CD8-positive, alpha-beta memory T cell (primary cell): ENCODE measurements at regions of chr3 and their contacts with region 1.

Region 1: DNA sequence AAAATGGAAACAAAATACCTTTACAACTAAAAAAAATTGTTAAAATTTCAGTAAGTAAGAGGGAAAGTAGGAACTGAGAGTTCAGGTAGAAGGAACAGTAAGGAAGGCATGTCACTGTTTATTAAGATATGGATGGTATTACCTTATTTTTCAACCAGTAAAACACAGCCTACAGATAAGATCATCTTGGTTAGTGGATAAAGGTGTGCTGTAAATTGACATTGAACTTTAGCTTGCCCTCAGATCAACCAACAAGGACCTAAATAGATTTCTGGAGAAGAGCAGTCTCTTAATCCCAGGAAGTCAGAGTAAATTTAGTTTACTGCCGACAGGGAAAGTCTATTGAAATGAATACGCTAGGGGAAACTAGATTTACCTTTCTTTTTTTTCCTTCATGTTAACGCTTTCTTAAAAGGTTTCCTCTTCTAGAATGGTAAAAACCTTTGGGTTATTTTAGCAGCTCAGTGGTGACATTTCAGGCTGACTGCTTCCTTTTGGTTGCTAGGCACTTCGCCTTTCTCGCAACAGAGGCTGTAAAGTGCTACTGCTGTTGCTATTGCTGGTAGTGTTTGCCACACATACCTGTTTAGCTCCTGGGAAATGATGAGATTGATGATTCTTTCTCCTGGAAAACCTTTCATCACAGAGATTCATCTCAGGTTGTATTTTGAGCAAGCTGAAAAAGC is 12.9 kb downstream of the DZIP3 start:
- DNase-seq: peak; percentile 8 to 74 (median 43)
- H3K4me3 ChIP-seq: peak overlapping the region; percentile 17
- H3K4me3 Mint-ChIP-seq: peak overlapping the region; percentile 78 to 91 (median 81)
- H3K27ac ChIP-seq: peak overlapping the region; percentile 34
- H3K27ac Mint-ChIP-seq: peak overlapping the region; percentile 83 to 98 (median 92)
- H3K4me1 ChIP-seq: peaks cover 44% of the 10 kb centered on the region
- H3K4me1 Mint-ChIP-seq: peaks cover 52 to 89% (median 82%) of the 10 kb centered on the region in 3 donors
- H3K27me3 ChIP-seq: no peaks in the 10 kb centered on the region
- H3K27me3 Mint-ChIP-seq: no peaks in the 10 kb centered on the region

Region 2: DNA sequence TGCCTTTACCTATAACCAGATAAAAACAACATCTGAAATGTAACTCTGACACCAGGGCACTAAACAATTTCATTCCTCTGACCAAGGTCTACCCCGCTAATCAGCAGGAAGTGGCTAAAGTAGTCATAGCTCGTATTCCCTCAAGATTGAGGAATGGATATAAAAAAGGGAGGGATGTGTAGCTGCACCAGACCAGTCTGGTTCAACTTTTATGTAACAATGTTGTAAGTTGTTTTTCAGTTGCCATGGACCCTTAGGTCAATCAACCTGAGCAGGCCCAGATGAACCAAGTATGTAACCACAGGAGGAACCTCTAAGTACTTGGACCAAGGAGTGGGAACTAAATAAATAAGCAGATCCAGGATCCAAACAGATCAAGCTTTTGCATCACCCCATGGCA is 351.8 kb before region 1 on chr3:
- CTCF ChIA-PET with region 1: no interaction called
- POLR2A ChIA-PET with region 1: no interaction called
- DNase-seq: no peak
- H3K4me3 ChIP-seq: no peak overlapping the region
- H3K4me3 Mint-ChIP-seq: no peak overlapping the region
- H3K27ac ChIP-seq: no peak overlapping the region
- H3K27ac Mint-ChIP-seq: no peak overlapping the region
- H3K4me1 ChIP-seq: no peaks in the 10 kb centered on the region
- H3K4me1 Mint-ChIP-seq: no peaks in the 10 kb centered on the region
- H3K27me3 ChIP-seq: no peaks in the 10 kb centered on the region
- H3K27me3 Mint-ChIP-seq: peaks cover 0 to 6% of the 10 kb centered on the region in 2 donors

Region 3: GRCh38 chr3:108589146-108589997 is 13.0 kb before region 1 on chr3 and contains the starts of genes CIP2A and DZIP3:
- CTCF ChIA-PET with region 1: interaction called, 75 read pairs
- POLR2A ChIA-PET with region 1: interaction called, 99 read pairs
- DNase-seq: peak; percentile 71 to 88 (median 86)
- H3K4me3 ChIP-seq: peak within 1 kb of the TSS; percentile 88
- H3K4me3 Mint-ChIP-seq: peak within 1 kb of the TSS; percentile 95 to 99 (median 98)
- H3K27ac ChIP-seq: peak within 1 kb of the TSS; percentile 90
- H3K27ac Mint-ChIP-seq: peak within 1 kb of the TSS; percentile 98 to 100 (median 99)
- H3K4me1 ChIP-seq: peaks cover 17% of the 10 kb centered on the region
- H3K4me1 Mint-ChIP-seq: peaks cover 29 to 59% (median 49%) of the 10 kb centered on the region in 3 donors
- H3K27me3 ChIP-seq: no peaks in the 10 kb centered on the region
- H3K27me3 Mint-ChIP-seq: no peaks in the 10 kb centered on the region
- total RNA-seq, gene CIP2A: 41.7 to 42.6 TPM
- total RNA-seq, gene DZIP3: 8.6 to 10.5 TPM